CD8-positive, alpha-beta memory T cell (primary cell): ENCODE measurements at regions of chr6 and their contacts with region 1.

Region 1: GRCh38 chr6:110039364-110039980 is 61.4 kb downstream of the GPR6 start:
- DNase-seq: peak; percentile 69 to 84 (median 74)
- H3K4me3 ChIP-seq: peak overlapping the region; percentile 71
- H3K4me3 Mint-ChIP-seq: peak overlapping the region; percentile 77 to 94 (median 91)
- H3K27ac ChIP-seq: peak overlapping the region; percentile 14
- H3K27ac Mint-ChIP-seq: peak overlapping the region; percentile 39 to 97 (median 89)
- H3K4me1 ChIP-seq: peaks cover 6% of the 10 kb centered on the region
- H3K4me1 Mint-ChIP-seq: peaks cover 12 to 16% (median 14%) of the 10 kb centered on the region in 3 donors
- H3K27me3 ChIP-seq: no peaks in the 10 kb centered on the region
- H3K27me3 Mint-ChIP-seq: no peaks in the 10 kb centered on the region

Region 2: DNA sequence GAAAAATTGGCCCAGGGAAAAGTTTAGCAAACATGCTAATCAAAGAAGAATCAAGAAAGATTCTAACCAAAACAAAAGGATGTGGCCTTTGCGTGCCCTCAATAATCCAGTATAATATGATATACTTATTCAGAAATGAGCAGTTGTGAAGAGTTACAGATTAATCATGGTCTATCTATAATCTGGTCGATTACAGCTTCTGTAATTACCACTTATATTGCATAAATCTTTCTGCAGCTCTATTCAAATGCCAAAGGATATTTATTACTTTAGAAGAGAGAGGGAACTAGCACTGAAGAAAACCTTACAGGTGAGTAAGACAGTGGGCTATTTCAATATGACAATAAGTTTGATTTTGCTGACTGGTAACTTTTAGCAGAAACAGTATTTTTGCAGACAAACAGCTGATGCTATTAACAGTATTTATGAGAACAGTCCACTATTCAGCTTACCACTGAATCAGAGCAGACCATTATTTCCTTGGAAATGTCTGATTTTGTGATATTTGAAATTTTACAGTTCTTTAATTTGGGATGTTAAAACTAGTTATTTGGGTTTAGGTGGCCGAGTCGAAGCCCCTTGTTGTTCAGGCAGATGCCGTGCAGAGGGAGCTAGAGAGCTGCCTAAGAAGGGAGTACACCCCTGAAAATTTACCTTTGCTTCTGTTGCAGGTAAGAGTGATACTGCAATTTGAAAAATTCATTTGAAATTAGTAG is 851.9 kb before region 1 on chr6:
- CTCF ChIA-PET with region 1: interaction called, 23 read pairs
- POLR2A ChIA-PET with region 1: no interaction called
- DNase-seq: peak; percentile 42 to 71 (median 49)
- H3K4me3 ChIP-seq: no peak overlapping the region
- H3K4me3 Mint-ChIP-seq: no peak overlapping the region
- H3K27ac ChIP-seq: no peak overlapping the region
- H3K27ac Mint-ChIP-seq: no peak overlapping the region
- H3K4me1 ChIP-seq: no peaks in the 10 kb centered on the region
- H3K4me1 Mint-ChIP-seq: no peaks in the 10 kb centered on the region
- H3K27me3 ChIP-seq: no peaks in the 10 kb centered on the region
- H3K27me3 Mint-ChIP-seq: peaks cover 3 to 45% of the 10 kb centered on the region in 2 donors

Region 3: DNA sequence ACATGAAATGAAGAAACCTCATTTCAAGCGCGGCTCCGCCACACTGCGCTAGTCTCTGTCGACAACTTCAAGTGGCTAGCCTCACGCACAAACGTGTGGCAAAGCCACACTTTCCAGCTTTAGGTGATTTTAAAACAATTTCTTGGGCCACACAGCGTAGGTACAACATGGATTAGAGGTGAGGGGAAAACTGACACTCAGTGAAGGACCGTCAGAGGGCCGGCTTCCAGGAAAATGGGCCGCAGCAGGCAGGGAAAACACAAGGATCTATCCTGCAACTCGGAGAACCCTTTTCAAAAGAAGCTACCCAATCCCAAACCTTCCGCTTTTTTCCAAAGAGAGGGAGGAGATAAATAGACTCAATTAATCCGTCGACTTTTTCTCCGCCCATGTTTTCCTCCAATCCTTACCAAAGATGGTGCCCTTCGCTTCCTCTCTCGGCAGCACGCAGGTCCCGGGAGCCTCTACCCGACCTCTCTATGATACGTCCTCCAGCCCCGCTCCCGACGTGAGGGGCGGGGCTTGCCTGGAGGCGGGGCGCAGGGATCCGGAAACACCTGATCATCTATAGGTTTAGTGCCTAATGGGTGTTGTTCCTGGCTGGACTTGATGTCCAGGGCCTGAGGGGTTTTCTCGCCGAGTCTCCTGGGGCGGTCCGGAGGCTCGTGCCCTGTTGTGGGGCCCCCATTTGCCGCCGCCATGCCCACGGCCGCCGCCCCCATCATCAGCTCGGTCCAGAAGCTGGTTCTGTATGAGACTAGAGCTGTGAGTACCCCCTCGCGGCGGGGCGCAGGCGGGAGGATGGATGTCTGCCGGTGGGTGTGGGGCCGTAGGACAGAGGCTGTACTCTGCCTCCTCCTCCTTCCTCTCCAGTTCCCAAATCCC is 348.5 kb before region 1 on chr6 and contains the starts of genes AK9 and FIG4:
- CTCF ChIA-PET with region 1: interaction called, 7 read pairs
- POLR2A ChIA-PET with region 1: interaction called, 10 read pairs
- DNase-seq: peak; percentile 80 to 90 (median 85)
- H3K4me3 ChIP-seq: peak within 1 kb of the TSS; percentile 97
- H3K4me3 Mint-ChIP-seq: peak within 1 kb of the TSS; percentile 91 to 97 (median 93)
- H3K27ac ChIP-seq: peak within 1 kb of the TSS; percentile 81
- H3K27ac Mint-ChIP-seq: peak within 1 kb of the TSS; percentile 72 to 98 (median 96)
- H3K4me1 ChIP-seq: peaks cover 11% of the 10 kb centered on the region
- H3K4me1 Mint-ChIP-seq: peaks cover 21 to 46% (median 35%) of the 10 kb centered on the region in 3 donors
- H3K27me3 ChIP-seq: no peaks in the 10 kb centered on the region
- H3K27me3 Mint-ChIP-seq: no peaks in the 10 kb centered on the region
- total RNA-seq, gene AK9: 5.1 to 5.6 TPM
- total RNA-seq, gene FIG4: 11.2 to 13.2 TPM

Region 4: GRCh38 chr6:109715616-109716015 is 323.9 kb before region 1 on chr6:
- CTCF ChIA-PET with region 1: interaction called, 14 read pairs
- POLR2A ChIA-PET with region 1: no interaction called
- DNase-seq: no peak
- H3K4me3 ChIP-seq: no peak overlapping the region
- H3K4me3 Mint-ChIP-seq: no peak overlapping the region
- H3K27ac ChIP-seq: no peak overlapping the region
- H3K27ac Mint-ChIP-seq: no peak overlapping the region
- H3K4me1 ChIP-seq: no peaks in the 10 kb centered on the region
- H3K4me1 Mint-ChIP-seq: peaks cover 0 to 16% (median 10%) of the 10 kb centered on the region in 3 donors
- H3K27me3 ChIP-seq: no peaks in the 10 kb centered on the region
- H3K27me3 Mint-ChIP-seq: no peaks in the 10 kb centered on the region

Region 5: DNA sequence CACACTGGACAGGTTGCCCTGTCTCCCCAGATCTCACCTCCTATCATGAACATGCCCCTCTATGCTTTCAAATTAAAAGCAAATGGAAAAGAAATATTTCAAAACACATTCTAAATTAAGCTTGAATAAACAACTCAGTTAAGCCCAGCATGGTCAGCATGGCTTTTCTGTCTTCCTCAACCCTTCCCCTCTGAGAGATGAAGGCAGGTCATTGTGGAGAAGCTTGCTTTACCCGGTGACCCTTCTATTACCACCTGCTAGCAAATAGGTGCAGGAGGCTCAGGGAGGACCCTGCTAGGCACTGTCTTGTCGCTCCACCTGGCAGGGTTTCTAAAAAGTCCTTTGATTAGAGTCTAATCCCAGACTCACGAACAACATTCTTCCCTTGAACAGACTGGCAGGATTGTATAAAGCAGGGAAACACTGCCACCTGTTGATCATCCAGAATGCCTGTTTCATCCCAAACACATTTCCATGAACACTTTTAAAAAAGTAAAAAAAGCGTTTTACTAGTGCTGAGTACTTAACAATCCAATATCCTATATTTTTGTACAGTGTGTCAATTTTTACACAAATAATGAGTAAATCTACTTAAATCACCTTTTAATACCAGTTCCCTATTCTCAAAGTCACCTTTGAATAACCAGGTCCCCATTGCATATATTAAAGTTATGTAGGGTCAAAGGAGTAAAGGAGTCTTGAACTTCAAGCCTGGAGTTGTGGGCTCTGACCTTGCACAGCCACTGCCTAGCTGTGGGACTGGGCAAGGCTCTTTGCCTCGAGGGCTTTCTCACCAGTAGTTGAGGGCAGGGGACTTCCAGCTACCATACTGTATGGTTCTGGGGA is 14.1 kb after region 1 on chr6:
- CTCF ChIA-PET with region 1: interaction called, 21 read pairs
- POLR2A ChIA-PET with region 1: no interaction called
- DNase-seq: peak in 1 of 5 donors; percentile 28
- H3K4me3 ChIP-seq: no peak overlapping the region
- H3K4me3 Mint-ChIP-seq: no peak overlapping the region
- H3K27ac ChIP-seq: no peak overlapping the region
- H3K27ac Mint-ChIP-seq: peak overlapping the region in 1 of 8 donors; percentile 6
- H3K4me1 ChIP-seq: no peaks in the 10 kb centered on the region
- H3K4me1 Mint-ChIP-seq: peaks cover 0 to 1% (median 0%) of the 10 kb centered on the region in 3 donors
- H3K27me3 ChIP-seq: peaks cover 4% of the 10 kb centered on the region
- H3K27me3 Mint-ChIP-seq: peaks cover 15 to 27% of the 10 kb centered on the region in 2 donors